Left cardiac atrium (tissue), 4 donors: ENCODE measurements at regions of chr2 and their contacts with region 1.

Region 1: GRCh38 chr2:118855451-118856279 is 8.2 kb upstream of the EN1 start:
- DNase-seq: peak; percentile 82
- ATAC-seq: peak; percentile 91 to 92

Region 2: DNA sequence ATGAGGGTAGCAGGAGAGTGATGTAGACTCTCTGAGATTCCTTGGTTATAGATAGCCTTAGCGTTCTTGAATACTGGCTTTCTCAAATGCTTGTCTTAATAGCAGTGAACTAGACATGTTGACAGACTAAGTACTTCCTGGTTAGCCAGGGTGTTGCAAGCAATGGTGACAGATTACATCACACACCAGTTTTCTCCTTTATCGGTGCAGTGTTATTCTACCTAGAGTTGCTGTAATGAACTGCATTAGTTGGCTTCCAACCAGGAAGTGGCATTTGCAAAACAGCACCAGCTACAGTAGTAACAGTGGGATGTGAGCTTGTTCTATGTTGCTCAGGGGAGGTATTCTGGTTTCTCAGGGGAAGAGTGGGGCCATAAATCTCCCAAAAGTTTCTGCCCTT is 1623.4 kb before region 1 on chr2:
- intact Hi-C with region 1: no loop called
- DNase-seq: no peak
- ATAC-seq: no peak

Region 3: DNA sequence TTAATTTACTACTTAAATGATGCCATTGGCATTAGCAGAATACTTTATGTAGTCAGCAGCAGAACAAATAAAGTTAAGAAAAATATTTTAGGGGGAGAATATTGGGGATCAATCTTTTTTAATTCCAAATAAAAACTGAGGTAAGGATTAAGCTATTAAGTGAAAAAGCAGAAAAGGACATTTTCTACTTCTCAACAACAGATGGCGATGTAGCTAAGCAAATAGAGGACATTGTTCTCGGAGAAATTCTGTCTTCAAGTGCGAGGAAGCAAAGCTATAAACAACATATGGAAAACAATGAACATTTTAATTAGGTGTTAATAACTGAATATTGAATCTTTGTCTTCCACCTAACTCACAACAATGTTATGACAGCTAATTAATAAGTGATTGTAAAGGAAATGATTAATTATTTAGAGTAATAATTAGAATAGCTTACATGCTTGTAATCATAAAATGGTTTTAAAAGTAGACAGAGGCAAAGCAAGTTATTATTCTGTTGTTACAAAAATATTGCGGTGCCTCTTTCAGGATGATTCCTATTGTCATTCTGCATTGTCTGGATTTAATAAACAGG is 808.9 kb before region 1 on chr2:
- intact Hi-C with region 1: loop called in 1 of 2 experiments (anchors 5 kb)
- DNase-seq: no peak
- ATAC-seq: peak in 1 of 2 donors; percentile 65

Region 4: GRCh38 chr2:118221666-118222594 is 633.7 kb before region 1 on chr2:
- intact Hi-C with region 1: loop called in 1 of 2 experiments (anchors 10 kb)
- DNase-seq: no peak
- ATAC-seq: peak; percentile 78 to 85

Region 5: DNA sequence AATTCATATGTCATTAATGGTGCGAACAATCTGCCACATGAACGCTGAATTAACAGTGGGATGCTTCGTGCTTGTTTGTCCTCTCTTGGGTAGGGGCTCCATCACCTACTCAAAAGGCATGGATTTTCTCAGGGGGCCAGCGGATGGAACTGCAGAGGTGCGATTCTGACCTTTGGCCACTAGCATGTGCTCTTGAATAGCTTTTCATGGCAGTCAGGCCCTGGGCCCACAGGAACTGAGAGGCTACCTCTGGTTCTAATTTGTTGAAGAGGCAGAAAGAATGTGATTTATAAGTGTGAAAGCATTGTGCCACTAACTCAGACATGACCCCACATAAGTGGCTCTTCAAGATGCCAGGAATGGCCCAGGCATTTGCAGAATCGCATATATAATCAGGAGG is 484.1 kb before region 1 on chr2:
- intact Hi-C with region 1: loop called in 1 of 2 experiments (anchors 5 kb)
- DNase-seq: no peak
- ATAC-seq: no peak

Region 6: DNA sequence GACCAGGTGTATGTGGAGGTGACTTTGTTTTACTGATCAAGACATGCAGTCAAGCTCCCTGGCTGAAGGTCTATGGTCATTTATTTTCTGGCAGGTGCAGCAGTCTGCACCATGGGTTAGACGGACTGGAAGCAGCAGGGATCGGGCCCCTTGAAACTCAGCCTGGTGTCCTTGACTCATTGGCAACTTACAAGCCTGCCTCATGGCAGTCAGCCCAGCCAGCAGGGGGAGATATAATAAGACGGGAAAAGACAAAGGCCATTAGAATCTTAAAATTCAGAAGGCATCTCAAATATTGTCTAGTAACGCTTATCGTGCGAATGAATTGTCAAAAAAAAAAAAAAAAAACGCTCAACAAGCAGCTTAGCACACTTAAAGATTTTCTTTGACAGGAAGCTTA is 316.4 kb before region 1 on chr2:
- intact Hi-C with region 1: loop called (anchors 5 to 10 kb)
- DNase-seq: peak; percentile 26
- ATAC-seq: peak in 1 of 2 donors; percentile 30

Region 7: DNA sequence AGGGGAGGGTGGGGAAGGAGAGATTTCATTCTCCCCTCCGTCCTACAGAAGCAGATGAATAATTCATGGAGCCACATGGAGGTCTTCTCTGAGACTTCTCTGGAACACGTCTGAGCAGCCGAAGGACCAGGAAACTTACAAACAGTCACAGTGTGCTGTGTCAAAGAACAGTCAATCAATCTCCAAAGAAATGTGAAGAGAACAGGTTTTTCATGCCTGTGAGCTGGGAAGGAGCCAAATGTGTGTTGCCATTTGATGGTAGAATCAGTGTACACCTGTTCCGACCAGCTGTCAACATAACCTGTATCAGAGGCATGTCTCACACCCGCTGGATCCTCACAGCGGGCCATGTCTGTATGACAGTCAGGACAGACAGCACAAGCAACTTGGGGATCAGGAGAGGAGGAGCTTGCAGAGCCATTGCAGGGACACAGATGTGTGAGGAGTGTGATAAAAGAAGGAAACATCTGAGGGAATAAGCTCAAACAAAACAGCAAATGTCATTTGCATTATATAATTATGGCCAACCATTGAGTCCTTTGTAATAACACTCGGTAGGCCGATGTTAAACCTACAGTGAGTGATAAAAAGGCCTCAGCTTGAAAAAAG is 306.7 kb before region 1 on chr2:
- intact Hi-C with region 1: loop called (anchors 5 to 10 kb)
- DNase-seq: no peak
- ATAC-seq: no peak

Region 8: DNA sequence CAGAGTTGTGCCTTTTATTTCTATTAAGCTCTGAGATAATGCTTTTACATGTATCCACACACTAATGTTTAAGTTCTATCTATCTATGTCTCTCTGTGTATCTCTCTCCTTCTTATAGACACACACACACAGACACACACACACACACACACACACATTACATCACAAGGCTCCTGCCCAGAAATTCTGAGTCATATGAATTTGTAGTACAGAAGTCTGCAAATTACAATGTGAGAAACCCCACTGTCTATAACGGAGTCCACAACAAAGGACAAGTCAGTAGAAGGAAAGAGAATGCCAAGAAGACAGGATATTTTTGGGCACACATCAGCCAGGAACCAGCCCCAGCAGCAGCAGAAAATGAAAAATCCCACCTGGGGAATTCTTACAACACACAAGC is 150.6 kb before region 1 on chr2:
- intact Hi-C with region 1: no loop called
- DNase-seq: no peak
- ATAC-seq: no peak

Region 9: GRCh38 chr2:118834901-118835745 is 20.5 kb before region 1 on chr2:
- intact Hi-C with region 1: no loop called
- DNase-seq: no peak
- ATAC-seq: peak; percentile 27 to 29